IMR-90 (cell line): ENCODE measurements at regions of chr16 and their contacts with region 1.

Region 1: GRCh38 chr16:19817122-19817521 is 67.5 kb downstream of the GPRC5B start:
- DNase-seq: no peak
- ATAC-seq: no peak
- H3K4me3 ChIP-seq: no peak overlapping the region
- H3K27ac ChIP-seq: no peak overlapping the region
- H3K4me1 ChIP-seq: no peaks in the 10 kb centered on the region; the same call in 1 of the 2 replicates
- H3K27me3 ChIP-seq: no peaks in the 10 kb centered on the region
- CTCF ChIP-seq: no peak
- POLR2A ChIP-seq: no peak
- RAD21 ChIP-seq: no peak

Region 2: DNA sequence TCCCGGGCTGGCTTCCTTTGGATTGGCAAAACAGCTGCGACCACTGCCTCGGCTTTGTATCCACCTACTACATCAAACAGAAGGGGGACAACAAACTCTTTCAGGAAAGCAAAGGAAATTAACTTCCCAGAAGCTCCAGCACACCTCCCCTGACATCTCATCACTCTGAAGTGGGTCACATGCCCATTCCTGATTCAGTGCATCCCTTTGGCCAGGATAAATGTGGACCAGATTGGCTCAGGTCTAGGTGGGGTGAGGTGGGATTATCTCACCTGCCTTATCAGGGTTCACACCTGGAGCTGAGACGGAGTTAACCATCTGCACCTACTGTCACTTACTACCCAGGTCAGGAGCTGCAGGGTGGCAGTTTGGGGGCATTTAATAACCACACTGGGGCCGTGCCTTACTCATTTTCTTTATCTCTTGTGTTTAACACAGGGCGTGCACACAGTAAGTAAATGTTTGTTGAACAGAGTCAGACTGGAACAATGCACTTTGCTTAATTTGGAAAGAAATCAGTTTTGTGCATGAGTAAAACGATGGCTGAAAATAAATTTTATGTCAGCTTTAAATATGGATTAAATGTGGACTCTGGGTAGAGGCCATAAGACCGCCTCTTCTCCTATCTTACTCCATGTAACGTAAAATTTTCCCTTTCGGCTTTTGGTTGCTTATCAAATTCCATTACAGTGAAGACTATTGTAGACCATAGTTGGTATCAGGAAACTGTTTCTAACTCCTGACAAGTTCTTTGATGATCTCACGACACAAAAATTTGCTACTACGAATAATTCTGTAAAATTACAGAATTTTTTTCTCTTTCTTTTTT is 63.1 kb before region 1 on chr16:
- CTCF ChIA-PET with region 1: no interaction called
- POLR2A ChIA-PET with region 1: no interaction called
- dilution Hi-C with region 1: no loop called
- in situ Hi-C with region 1: no loop called
- intact Hi-C with region 1: loop called (anchors 5 kb)
- DNase-seq: peak; percentile 83
- ATAC-seq: peak; percentile 65
- H3K4me3 ChIP-seq: no peak overlapping the region
- H3K27ac ChIP-seq: peak overlapping the region; percentile 44; the same call in 1 of the 2 replicates
- H3K4me1 ChIP-seq: peaks cover 12% of the 10 kb centered on the region
- H3K27me3 ChIP-seq: no peaks in the 10 kb centered on the region
- CTCF ChIP-seq: no peak
- POLR2A ChIP-seq: no peak
- RAD21 ChIP-seq: no peak

Region 3: DNA sequence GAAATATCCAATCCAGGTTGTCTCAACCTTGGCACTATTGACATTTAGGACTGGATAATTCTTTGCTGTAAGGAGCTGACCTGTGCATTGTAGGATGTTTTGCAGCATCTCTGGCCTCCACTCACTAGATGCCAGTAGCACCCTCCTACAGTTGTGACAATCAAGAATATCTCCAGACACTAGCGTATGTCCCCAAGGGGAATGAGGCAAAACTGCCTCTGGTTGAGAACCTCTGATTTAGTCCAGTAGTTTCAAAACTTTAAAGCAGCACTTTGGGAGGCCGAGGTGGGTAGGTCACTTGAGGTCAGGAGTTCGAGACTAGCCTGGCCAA is 50.6 kb before region 1 on chr16:
- CTCF ChIA-PET with region 1: no interaction called
- POLR2A ChIA-PET with region 1: no interaction called
- dilution Hi-C with region 1: no loop called
- in situ Hi-C with region 1: no loop called
- intact Hi-C with region 1: no loop called
- DNase-seq: no peak
- ATAC-seq: no peak
- H3K4me3 ChIP-seq: no peak overlapping the region
- H3K27ac ChIP-seq: no peak overlapping the region; the same call in 1 of the 2 replicates
- H3K4me1 ChIP-seq: peaks cover 4% of the 10 kb centered on the region; the same call in 1 of the 2 replicates
- H3K27me3 ChIP-seq: no peaks in the 10 kb centered on the region
- CTCF ChIP-seq: no peak
- POLR2A ChIP-seq: no peak
- RAD21 ChIP-seq: no peak

Region 4: GRCh38 chr16:19781226-19781625 is 35.9 kb before region 1 on chr16:
- CTCF ChIA-PET with region 1: no interaction called
- POLR2A ChIA-PET with region 1: no interaction called
- dilution Hi-C with region 1: no loop called
- in situ Hi-C with region 1: no loop called
- intact Hi-C with region 1: loop called (anchors 2 kb)
- DNase-seq: peak; percentile 18
- ATAC-seq: no peak; the same call in 1 of the 2 replicates
- H3K4me3 ChIP-seq: no peak overlapping the region
- H3K27ac ChIP-seq: no peak overlapping the region
- H3K4me1 ChIP-seq: no peaks in the 10 kb centered on the region
- H3K27me3 ChIP-seq: no peaks in the 10 kb centered on the region
- CTCF ChIP-seq: no peak
- POLR2A ChIP-seq: no peak
- RAD21 ChIP-seq: no peak

Region 5: DNA sequence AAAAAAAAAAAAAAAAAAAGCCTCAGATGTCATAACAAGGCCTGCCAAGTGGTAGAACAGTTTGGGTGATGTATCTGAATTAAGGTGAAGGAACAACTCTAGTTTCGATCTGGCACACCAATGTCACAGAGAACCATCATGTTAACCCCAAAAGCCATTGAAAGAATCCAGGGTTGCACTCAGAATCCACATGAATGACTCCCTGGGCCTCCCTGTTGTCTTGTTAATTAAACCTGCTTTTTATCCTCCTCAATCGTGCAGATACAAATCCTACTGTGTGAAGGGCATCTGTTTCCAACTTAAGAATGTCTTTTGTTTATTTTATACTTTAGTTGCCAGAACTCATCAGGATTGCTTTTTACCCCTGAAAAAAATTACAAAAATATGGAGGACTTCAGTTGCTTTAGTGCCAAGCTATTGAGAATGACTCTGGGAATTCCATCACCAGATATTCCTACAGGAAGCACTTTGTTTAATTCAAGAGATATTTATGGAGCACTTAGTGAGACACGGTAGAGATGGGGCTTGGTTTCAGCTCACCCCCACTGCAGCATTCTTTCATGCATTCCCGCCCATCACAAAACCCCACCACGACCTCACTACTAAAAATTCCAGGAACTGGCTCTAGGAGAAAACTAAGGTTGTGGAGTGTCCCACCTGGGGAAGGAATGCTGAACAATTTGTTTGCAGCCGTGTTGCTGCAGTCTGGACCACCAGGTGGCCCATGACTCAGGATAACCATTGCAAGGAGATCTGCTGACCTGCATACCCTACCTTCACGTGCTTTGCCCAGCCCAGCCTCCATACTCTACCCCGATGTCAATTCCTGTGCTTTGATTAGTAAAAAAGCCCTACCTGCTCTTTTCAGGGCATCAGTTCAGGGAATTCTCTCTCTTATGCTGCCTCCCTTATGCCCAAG is 131.3 kb after region 1 on chr16:
- CTCF ChIA-PET with region 1: no interaction called
- POLR2A ChIA-PET with region 1: no interaction called
- dilution Hi-C with region 1: no loop called
- in situ Hi-C with region 1: no loop called
- intact Hi-C with region 1: no loop called
- DNase-seq: no peak
- ATAC-seq: no peak
- H3K4me3 ChIP-seq: no peak overlapping the region
- H3K27ac ChIP-seq: no peak overlapping the region
- H3K4me1 ChIP-seq: no peaks in the 10 kb centered on the region
- H3K27me3 ChIP-seq: no peaks in the 10 kb centered on the region
- CTCF ChIP-seq: no peak
- POLR2A ChIP-seq: no peak
- RAD21 ChIP-seq: no peak